PC-3 (cell line): ENCODE measurements at regions of chr1 and their contacts with region 1.

Region 1: GRCh38 chr1:115717541-115717940 is 51.0 kb downstream of the CASQ2 start:
- DNase-seq: peak; percentile 53
- ATAC-seq: no peak
- H3K4me3 ChIP-seq: no peak overlapping the region
- H3K27ac ChIP-seq: no peak overlapping the region
- H3K4me1 ChIP-seq: peaks cover 34% of the 10 kb centered on the region
- H3K27me3 ChIP-seq: no peaks in the 10 kb centered on the region
- CTCF ChIP-seq: peak; percentile 63

Region 2: DNA sequence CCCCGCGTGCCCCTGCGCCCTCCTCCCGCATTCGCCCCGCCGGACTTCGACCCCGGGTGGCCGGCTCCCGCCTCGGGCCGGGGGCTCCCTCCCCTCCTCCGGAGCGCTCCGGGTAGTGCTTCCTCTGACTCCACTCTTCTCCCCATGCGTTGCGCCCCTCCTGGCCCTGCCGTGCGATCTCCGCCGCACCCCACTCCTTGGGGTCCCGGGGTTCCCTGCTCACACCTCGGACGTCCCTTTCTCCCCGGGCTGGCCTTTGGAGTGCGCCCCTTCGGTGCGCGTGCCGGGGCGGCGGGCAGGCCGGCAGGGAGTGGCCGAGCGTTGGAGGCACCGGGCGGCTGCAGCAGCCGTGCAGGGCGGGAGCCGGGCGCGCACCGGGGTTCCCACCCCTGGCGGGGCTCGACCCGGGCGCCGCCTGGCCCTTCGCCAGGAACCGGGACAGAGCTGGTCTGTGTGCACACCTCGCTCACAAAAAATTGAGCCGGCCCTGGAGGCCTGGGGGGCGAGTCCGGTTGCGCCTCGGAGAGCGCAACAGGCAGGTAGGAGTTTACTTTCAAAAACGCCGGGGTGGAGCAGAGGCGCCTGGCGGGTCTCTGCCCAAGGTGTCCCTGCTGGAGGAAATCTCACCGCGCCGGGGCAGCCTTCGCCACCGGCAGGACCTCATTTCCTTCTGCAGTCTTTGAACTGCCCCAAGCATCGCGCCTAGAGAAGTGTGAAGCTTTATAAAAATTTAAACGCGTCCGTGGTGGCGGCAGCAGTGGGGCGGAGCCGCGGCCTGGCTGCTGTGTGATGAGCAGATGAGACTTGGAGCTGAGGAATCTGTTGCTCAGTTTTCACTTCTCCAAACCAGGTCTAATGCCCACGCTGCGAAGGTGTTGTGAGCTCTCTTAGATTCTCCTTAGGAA is 75.1 kb before region 1 on chr1:
- CTCF ChIA-PET with region 1: no interaction called
- POLR2A ChIA-PET with region 1: no interaction called
- intact Hi-C with region 1: loop called (anchors 2 kb)
- DNase-seq: peak; percentile 56
- ATAC-seq: peak; percentile 56
- H3K4me3 ChIP-seq: peak overlapping the region; percentile 76
- H3K27ac ChIP-seq: peak overlapping the region; percentile 33
- H3K4me1 ChIP-seq: peaks cover 29% of the 10 kb centered on the region
- H3K27me3 ChIP-seq: no peaks in the 10 kb centered on the region
- CTCF ChIP-seq: 0 out of 2 replicates have a peak, but pooled peaks have one; percentile 25

Region 3: DNA sequence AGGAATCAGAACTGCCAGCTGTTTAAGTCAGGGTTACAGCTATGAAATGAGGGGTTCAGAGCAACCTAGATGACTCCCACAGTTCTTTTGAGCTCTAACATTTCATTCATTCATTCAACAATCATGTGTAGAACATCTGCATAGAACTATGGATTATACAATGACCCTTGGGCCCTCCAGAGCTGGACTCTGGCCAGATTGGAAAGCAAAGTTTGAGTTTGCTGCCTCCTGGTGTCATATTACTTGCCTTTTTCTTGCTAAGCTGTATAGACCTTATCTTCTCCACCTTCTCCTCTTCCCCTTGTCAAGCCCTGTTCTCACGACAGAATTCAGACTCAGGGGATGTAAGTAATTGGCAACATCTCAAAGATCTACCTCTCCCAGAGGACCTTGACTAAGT is 47.0 kb after region 1 on chr1:
- CTCF ChIA-PET with region 1: interaction called, 8 read pairs
- POLR2A ChIA-PET with region 1: no interaction called
- intact Hi-C with region 1: loop called (anchors 2 kb)
- DNase-seq: peak; percentile 83
- ATAC-seq: peak; percentile 67
- H3K4me3 ChIP-seq: no peak overlapping the region
- H3K27ac ChIP-seq: no peak overlapping the region
- H3K4me1 ChIP-seq: no peaks in the 10 kb centered on the region
- H3K27me3 ChIP-seq: no peaks in the 10 kb centered on the region
- CTCF ChIP-seq: peak; percentile 79